Activated B cell treated with CpG ODN at 0.5 μM for 24 hours (primary cell): ENCODE measurements at regions of chr7 and their contacts with region 1.

Region 1: DNA sequence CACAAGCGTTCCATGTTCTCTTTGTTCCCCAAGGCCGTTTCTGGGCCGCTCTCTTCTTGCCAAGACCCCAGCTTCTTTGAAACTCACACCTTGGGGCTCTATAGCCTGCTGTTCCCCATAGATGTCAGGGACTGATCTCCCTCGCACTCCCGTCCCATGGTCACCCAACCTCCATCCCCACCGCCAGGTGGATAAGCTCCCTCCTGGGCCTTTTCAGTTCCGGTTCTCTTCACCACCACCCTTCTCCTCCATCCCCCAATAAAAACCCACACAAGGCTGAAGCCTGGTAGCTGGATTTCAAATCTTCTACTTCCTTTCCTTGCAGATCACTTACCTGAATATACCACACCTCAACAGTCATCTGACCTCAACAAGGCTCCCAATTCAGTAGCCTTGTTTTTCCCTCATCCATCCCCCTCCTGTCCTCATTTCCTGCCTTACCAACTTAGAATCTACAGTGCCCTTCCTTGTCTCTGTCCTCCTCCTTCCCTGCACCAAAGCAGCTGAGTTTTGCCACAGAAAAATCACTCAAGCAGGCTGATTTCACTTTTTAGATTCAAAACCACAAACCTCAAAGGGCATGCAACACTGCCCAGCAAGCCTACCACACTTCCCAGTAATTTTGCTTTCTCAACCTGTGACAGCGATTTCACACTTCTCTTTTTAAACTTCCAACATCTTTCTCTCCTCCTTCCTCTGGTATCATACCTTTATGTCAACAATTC is 7.7 kb downstream of the SLC37A3 start:
- DNase-seq: peak; percentile 32
- ATAC-seq: peak; percentile 88
- H3K4me3 Mint-ChIP-seq: no peak overlapping the region
- H3K27ac Mint-ChIP-seq: no peak overlapping the region
- H3K4me1 Mint-ChIP-seq: no peaks in the 10 kb centered on the region
- H3K27me3 Mint-ChIP-seq: no peaks in the 10 kb centered on the region
- CTCF ChIP-seq: no peak

Region 2: GRCh38 chr7:140036224-140036962 is 354.2 kb before region 1 on chr7:
- CTCF ChIA-PET with region 1: no interaction called
- POLR2A ChIA-PET with region 1: no interaction called
- intact Hi-C with region 1: no loop called
- DNase-seq: no peak
- ATAC-seq: peak; percentile 71
- H3K4me3 Mint-ChIP-seq: no peak overlapping the region
- H3K27ac Mint-ChIP-seq: peak overlapping the region; percentile 54
- H3K4me1 Mint-ChIP-seq: peaks cover 24% of the 10 kb centered on the region
- H3K27me3 Mint-ChIP-seq: no peaks in the 10 kb centered on the region
- CTCF ChIP-seq: no peak

Region 3: GRCh38 chr7:140358412-140359051 is 32.1 kb before region 1 on chr7:
- CTCF ChIA-PET with region 1: no interaction called
- POLR2A ChIA-PET with region 1: no interaction called
- intact Hi-C with region 1: loop called (anchors 2 kb)
- DNase-seq: no peak
- ATAC-seq: peak; percentile 38
- H3K4me3 Mint-ChIP-seq: peak overlapping the region; percentile 86
- H3K27ac Mint-ChIP-seq: no peak overlapping the region
- H3K4me1 Mint-ChIP-seq: peaks cover 15% of the 10 kb centered on the region
- H3K27me3 Mint-ChIP-seq: no peaks in the 10 kb centered on the region
- CTCF ChIP-seq: no peak

Region 4: DNA sequence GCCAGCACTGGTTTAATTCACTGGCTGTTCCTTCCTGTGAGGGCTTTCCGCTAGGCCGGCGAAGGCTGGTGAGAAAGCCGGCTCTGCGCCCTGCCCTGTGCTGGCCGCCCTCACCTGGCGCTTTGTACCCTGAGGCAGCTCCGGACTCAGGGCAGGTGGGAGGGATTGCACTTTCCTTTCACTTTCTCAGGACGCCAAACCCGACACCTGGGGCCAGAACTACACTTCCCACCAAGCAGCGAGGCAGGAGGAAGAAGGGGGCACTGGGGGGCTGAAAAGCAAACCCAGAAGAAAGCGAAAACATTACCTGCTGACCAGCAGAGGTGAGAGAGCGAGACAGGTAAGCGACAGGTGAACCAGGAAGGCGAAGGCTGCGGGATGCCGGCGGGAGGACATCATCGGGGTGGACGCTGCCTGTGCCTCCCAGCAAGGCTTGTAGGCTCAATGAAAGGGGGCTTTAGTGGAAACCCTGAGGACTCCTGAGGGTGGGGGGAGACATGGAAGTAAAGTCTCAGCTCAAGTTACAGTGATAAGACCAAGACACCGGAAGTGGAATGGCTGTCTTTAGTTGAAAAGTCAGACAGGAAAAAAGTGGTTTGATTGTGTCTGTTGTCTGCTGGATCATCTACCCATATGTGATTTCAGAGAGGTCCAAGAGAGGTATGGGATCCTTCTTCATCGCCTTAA is 13.4 kb after region 1 on chr7 and contains the start of gene RAB19:
- CTCF ChIA-PET with region 1: no interaction called
- POLR2A ChIA-PET with region 1: no interaction called
- intact Hi-C with region 1: loop called (anchors 2 kb)
- DNase-seq: peak; percentile 20
- ATAC-seq: peak; percentile 81
- H3K4me3 Mint-ChIP-seq: peak within 1 kb of the TSS; percentile 85
- H3K27ac Mint-ChIP-seq: peak within 1 kb of the TSS; percentile 46
- H3K4me1 Mint-ChIP-seq: peaks cover 13% of the 10 kb centered on the region
- H3K27me3 Mint-ChIP-seq: no peaks in the 10 kb centered on the region
- CTCF ChIP-seq: no peak
- total RNA-seq, gene RAB19: 0.37 and 0.55 TPM in 2 replicates

Region 5: DNA sequence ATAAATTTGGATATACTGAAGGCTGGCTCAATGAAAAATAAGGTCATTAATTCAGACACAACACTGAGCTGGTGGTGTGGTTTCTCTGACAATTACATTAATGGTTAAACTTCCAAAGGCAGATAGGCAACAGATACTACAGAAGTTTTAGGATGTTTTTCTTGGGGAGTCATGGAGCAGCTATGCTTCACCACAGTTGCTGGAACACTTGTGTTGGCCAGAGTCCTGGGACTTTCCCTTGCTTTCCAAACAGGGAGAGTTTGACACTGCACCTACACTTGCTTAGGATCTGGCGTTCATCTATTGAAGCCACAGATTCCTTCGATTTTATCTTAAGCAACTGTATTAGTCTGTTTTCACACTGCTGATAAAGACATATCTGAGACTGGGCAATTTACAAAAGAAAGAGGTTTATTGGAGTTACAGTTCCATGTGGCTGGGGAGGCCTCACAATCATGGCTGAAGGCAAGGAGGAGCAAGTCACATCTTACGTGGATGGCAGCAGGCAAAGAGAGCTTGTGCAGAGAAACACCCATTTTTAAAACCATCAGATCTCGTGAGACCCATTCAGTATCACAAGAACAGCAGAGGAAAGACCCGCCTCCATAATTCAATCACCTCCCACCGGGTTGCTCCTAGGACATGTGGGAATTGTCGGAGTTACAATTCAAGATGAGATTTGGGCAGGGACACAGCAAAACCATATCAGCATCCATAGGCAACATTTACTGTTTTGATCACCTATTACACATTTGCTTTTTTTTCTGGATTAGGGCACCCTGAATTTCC is 655.4 kb after region 1 on chr7:
- CTCF ChIA-PET with region 1: no interaction called
- POLR2A ChIA-PET with region 1: no interaction called
- intact Hi-C with region 1: no loop called
- DNase-seq: no peak
- ATAC-seq: no peak
- H3K4me3 Mint-ChIP-seq: no peak overlapping the region
- H3K27ac Mint-ChIP-seq: no peak overlapping the region
- H3K4me1 Mint-ChIP-seq: no peaks in the 10 kb centered on the region
- H3K27me3 Mint-ChIP-seq: peaks cover 24% of the 10 kb centered on the region
- CTCF ChIP-seq: no peak